ENCODE measurements at regions of chr22 and their contacts with region 1.

Region 1: DNA sequence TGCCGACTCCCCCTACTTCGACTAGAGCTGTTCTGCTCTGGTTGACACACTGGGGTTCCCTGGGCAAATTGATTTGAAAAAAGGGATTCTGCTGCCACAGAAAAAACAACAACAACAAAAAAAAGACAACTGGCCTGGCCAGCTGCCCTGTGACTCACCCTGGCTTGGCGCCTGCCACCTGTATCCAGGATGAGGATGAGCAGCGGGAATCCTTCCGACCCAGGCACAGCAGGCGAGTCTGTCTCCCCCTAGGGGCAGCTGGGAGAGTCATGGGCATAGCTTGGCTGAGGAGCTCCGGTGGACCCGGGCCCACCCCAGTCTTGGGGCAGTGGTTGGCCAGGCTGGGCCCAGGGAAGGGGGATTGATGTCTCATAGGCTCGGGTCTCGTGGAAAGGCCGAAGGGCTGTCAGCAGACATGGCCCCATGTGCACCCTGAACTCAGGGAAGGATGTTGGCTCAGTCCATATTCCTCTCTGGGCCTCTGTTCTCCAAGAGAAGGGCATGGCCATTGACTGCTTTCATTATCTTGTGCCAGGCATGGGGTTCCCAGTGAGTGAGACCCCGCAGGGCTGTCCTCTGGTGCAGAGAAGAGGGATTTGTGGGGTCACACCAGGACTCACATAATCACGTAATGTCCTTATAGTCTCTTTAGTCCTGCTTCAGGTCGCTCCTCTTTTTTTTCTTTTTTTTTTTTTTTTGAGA is 10.4 kb upstream of the SUN2 start:
- DNase-seq: peak in 9 of 10 donors; percentile 56 to 87 (median 77)
- H3K4me3 ChIP-seq: peak overlapping the region in 1 of 59 donors; percentile 31
- H3K27ac ChIP-seq: peak overlapping the region in 58 of 59 donors; percentile 40 to 99 (median 84)
- H3K27me3 ChIP-seq: no peaks in the 10 kb centered on the region
- CTCF ChIP-seq: peak; percentile 42 to 93 (median 78)

Region 2: GRCh38 chr22:38601221-38601764 is 164.9 kb before region 1 on chr22:
- intact Hi-C with region 1: no loop called
- DNase-seq: no peak
- H3K4me3 ChIP-seq: no peak overlapping the region
- H3K27ac ChIP-seq: no peak overlapping the region
- H3K27me3 ChIP-seq: no peaks in the 10 kb centered on the region
- CTCF ChIP-seq: no peak

Region 3: DNA sequence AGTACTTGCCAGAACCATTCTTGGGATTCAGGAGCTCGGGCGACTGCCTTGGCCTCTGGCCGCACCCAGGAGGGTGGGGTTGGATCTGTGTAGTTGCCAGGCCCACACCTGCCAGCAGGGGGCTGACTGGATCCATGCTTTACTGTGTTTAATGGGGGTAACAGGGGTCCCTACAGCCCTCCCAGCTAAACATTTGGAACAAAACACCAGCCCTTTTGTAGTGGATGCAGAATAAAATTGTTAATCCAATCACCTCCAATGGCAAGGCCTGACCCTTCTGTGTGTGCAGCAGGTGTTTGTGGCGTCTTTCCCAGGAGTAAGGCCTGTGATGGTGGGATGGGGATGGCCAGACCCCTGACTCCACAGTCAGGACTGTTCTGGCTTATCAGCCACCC is 32.9 kb before region 1 on chr22:
- intact Hi-C with region 1: loop called in 1 of 2 experiments (anchors 2 kb)
- DNase-seq: peak in 5 of 10 donors; percentile 60 to 73 (median 71)
- H3K4me3 ChIP-seq: peak overlapping the region in 1 of 59 donors; percentile 14
- H3K27ac ChIP-seq: peak overlapping the region; percentile 89 to 100 (median 98)
- H3K27me3 ChIP-seq: no peaks in the 10 kb centered on the region
- CTCF ChIP-seq: peak; percentile 41 to 79 (median 65)

Region 4: GRCh38 chr22:38788021-38788816 is 22.0 kb after region 1 on chr22:
- intact Hi-C with region 1: no loop called
- DNase-seq: peak in 4 of 10 donors; percentile 53 to 66 (median 59)
- H3K4me3 ChIP-seq: peak overlapping the region in 1 of 59 donors; percentile 3
- H3K27ac ChIP-seq: peak overlapping the region in 53 of 59 donors; percentile 1 to 90 (median 57)
- H3K27me3 ChIP-seq: no peaks in the 10 kb centered on the region
- CTCF ChIP-seq: no peak

Region 5: DNA sequence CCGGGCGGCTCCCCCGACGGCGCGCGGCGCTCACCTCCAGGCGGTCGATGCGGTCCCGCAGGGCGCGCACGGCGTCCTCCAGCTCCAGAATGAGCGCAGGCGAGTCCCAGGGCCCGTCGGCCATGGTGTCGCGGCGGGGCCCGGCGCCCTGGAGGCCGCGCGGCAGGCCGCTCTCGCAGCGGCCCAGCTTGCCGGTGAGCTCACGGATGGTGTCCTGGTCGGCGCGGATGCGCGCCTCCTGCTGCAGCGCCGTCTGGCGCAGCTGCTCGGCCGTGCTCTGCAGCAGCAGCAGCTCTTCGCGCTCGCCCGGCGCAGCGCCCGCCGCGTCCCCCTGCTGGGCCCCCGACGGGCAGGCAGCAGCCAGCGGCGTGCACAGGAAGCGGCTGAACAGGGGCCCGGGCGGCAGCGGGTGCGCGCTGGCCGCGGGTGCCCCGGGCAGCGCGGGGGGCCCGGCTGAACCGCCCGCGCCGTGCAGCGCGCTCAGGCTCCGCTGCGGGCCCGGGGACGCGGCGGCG is 77.0 kb after region 1 on chr22:
- intact Hi-C with region 1: loop called in 1 of 2 experiments (anchors 1 kb)
- DNase-seq: peak in 1 of 10 donors; percentile 73
- H3K4me3 ChIP-seq: peak overlapping the region; percentile 37 to 83 (median 67)
- H3K27ac ChIP-seq: peak overlapping the region in 54 of 59 donors; percentile 23 to 92 (median 72)
- H3K27me3 ChIP-seq: no peaks in the 10 kb centered on the region
- CTCF ChIP-seq: peak in 31 of 56 donors; percentile 8 to 49 (median 34)

Region 6: DNA sequence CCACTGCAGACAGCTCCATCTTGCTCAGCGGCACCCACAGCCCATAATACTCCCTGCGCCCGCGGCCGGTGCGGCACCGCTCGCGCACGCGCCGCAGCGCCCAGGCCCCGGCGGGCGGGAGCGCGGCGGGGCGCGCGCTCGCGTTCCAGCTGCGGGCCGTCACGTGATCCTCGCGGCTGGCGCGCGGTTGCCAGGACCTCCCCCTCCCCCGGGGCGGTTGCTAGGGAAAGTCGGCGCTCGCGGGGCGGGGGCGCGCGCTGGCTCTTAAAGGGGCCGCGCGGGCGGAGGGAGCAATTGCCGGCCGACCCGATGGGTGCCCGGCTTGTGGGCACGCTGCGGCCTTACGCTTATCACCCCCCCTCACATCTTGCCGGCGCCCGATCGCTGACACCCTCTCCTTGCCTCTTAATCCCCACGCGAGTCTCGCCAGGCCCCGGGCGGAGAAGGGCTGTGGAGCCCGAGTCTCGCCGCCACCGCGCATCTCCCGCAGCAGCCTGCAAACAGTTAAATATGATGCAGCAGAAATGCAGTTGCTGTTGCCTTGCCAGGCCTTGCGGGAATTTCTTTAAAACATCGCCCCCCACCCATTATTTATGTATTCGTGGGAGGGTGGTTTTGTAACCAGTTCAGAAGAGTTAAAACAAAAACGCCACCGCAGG is 106.1 kb after region 1 on chr22 and contains the start of gene CBX6:
- intact Hi-C with region 1: loop called (anchors 1 to 5 kb)
- DNase-seq: peak; percentile 91 to 96 (median 94)
- H3K4me3 ChIP-seq: peak within 1 kb of the TSS; percentile 60 to 98 (median 85)
- H3K27ac ChIP-seq: peak within 1 kb of the TSS; percentile 86 to 100 (median 99)
- H3K27me3 ChIP-seq: no peaks in the 10 kb centered on the region
- CTCF ChIP-seq: peak in 4 of 56 donors; percentile 3 to 17 (median 7)
- total RNA-seq, gene CBX6: 99.9 to 293 (median 188) TPM

Region 7: GRCh38 chr22:39003165-39003638 is 237.0 kb after region 1 on chr22:
- intact Hi-C with region 1: loop called in 1 of 2 experiments (anchors 5 kb)
- DNase-seq: peak in 6 of 10 donors; percentile 37 to 62 (median 50)
- H3K4me3 ChIP-seq: no peak overlapping the region
- H3K27ac ChIP-seq: no peak overlapping the region
- H3K27me3 ChIP-seq: peaks cover 0 to 5% (median 0%) of the 10 kb centered on the region in 45 donors
- CTCF ChIP-seq: peak; percentile 40 to 82 (median 69)

Region 8: GRCh38 chr22:39123751-39124601 is 357.7 kb after region 1 on chr22:
- intact Hi-C with region 1: loop called (anchors 5 kb)
- DNase-seq: no peak
- H3K4me3 ChIP-seq: no peak overlapping the region
- H3K27ac ChIP-seq: no peak overlapping the region
- H3K27me3 ChIP-seq: no peaks in the 10 kb centered on the region
- CTCF ChIP-seq: no peak

Region 9: GRCh38 chr22:39520054-39520891 is 754.0 kb after region 1 on chr22 and contains the start of gene ATF4:
- intact Hi-C with region 1: loop called in 1 of 2 experiments (anchors 10 kb)
- DNase-seq: peak; percentile 87 to 96 (median 94)
- H3K4me3 ChIP-seq: peak within 1 kb of the TSS; percentile 68 to 100 (median 99)
- H3K27ac ChIP-seq: peak within 1 kb of the TSS; percentile 91 to 100 (median 99)
- H3K27me3 ChIP-seq: no peaks in the 10 kb centered on the region
- CTCF ChIP-seq: peak in 2 of 56 donors; percentile 34 to 44
- total RNA-seq, gene ATF4: 110 to 287 (median 161) TPM

Measured in dorsolateral prefrontal cortex (tissue), 120 donors.